AG04449 (cell line): ENCODE measurements at regions of chr7 and their contacts with region 1.

Region 1: GRCh38 chr7:157273208-157274093 is 63.4 kb upstream of the DNAJB6 start:
- DNase-seq: no peak
- H3K4me3 ChIP-seq: no peak overlapping the region
- CTCF ChIP-seq: peak; percentile 99

Region 2: DNA sequence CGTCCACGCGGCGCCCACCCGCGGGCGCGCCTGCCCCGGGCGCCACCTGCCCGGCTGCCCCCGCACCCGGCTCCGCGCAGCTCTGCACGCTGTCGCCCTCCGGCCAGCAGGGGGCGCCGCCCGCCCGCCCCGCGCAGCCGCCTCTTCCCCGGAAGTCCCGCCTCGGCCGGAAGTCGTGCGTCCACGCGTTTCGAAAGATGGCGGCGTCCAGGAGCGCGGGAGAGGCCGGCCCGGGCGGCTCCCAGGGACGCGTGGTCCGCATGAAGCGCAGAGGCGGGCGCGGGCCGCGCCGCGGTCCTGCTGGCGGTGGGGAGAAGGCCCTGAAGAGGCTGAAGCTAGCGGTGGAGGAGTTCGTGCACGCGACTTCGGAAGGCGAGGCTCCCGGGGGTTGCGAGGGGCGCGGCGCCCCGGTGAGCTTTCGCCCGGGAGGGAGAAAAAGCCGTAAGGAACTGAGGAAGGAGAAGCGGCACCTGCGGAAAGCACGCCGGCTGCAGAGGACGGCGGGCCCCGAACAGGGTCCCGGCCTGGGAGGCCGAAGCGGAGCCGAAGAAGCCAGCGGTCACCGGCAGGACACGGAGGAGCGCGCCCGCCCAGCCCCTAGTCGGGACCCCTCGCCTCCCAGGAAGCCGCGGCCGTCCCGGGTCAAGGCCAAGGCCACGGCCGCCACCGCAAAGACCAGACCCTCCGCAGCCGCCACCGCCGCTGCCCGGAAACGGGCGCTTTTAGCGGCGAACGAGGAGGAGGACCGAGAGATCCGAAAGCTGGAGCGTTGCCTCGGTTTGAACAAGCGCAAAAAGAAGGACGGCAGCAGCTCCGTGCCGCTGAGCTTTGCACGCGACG is 323.7 kb before region 1 on chr7 and contains the start of gene NOM1:
- CTCF ChIA-PET with region 1: interaction called, 11 read pairs
- POLR2A ChIA-PET with region 1: no interaction called
- DNase-seq: peak; percentile 3
- H3K4me3 ChIP-seq: peak within 1 kb of the TSS; percentile 78
- CTCF ChIP-seq: peak; percentile 69

Region 3: DNA sequence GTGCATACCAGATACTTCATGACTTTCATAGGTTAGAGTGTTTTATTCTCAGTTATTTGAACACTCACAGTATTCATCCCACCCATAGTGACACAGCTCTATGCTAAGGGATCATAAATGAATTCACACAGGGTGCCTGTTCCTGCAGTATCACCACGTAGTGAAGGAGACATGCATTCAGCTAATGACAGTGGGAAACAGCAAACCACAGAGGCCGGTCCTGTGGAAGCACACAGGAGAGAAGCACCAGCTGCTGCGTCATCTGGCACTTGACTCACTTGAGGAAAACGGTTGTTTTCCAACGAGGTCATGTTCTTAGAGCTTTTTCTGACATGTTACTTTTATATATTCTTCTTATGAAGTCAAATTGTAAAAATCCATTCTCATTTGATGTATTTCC is 61.8 kb before region 1 on chr7:
- CTCF ChIA-PET with region 1: interaction called, 14 read pairs
- POLR2A ChIA-PET with region 1: no interaction called
- DNase-seq: peak; percentile 75
- H3K4me3 ChIP-seq: no peak overlapping the region
- CTCF ChIP-seq: no peak

Region 4: GRCh38 chr7:157250605-157251228 is 22.7 kb before region 1 on chr7:
- CTCF ChIA-PET with region 1: interaction called, 40 read pairs
- POLR2A ChIA-PET with region 1: no interaction called
- DNase-seq: no peak
- H3K4me3 ChIP-seq: no peak overlapping the region
- CTCF ChIP-seq: peak; percentile 77

Region 5: DNA sequence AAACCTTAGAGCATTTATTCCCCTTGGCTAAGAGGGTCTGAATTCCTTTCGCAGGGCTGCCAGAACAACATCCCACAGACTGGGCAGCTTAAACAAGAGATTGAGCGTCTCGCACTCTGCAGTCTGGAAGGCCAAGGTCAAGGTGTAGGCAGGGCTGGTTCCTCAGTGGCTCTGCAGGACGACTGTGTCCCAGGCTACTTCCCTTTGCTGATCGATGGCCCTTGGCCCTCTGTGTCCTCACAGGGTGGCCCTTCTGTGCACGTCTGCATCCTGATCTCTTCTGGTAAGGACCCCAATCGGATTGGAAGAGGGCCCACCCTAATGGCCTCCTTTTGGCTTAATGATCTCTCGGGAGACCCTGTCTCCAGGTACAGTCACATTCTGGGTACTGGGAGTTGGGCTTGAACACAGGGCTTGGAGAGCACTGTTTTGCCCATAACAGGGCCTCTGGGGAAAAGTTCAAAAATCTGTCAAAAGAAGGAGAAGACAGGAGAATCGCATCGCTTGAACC is 28.2 kb after region 1 on chr7:
- CTCF ChIA-PET with region 1: interaction called, 20 read pairs
- POLR2A ChIA-PET with region 1: no interaction called
- DNase-seq: no peak
- H3K4me3 ChIP-seq: no peak overlapping the region
- CTCF ChIP-seq: no peak

Region 6: DNA sequence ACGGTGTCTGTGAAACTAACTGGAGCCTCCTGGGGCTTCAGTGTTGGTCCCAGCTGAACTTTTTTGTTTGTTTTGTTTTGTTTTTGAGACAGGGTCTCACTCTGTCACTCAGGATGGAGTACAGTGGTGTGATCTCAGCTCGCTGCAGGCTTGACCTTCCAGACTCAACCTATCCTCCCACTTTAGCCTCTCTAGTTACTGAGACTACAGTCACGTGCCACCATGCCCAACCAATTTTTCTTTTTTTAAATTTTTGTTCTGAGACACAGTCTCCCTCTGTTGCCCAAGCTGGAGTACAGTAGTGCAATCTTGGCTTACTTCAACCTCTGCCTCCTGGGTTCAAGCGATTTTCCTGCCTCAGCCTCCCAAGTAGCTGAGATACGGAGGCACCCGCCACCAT is 50.0 kb after region 1 on chr7:
- CTCF ChIA-PET with region 1: no interaction called
- POLR2A ChIA-PET with region 1: no interaction called
- DNase-seq: no peak
- H3K4me3 ChIP-seq: no peak overlapping the region
- CTCF ChIP-seq: no peak

Region 7: DNA sequence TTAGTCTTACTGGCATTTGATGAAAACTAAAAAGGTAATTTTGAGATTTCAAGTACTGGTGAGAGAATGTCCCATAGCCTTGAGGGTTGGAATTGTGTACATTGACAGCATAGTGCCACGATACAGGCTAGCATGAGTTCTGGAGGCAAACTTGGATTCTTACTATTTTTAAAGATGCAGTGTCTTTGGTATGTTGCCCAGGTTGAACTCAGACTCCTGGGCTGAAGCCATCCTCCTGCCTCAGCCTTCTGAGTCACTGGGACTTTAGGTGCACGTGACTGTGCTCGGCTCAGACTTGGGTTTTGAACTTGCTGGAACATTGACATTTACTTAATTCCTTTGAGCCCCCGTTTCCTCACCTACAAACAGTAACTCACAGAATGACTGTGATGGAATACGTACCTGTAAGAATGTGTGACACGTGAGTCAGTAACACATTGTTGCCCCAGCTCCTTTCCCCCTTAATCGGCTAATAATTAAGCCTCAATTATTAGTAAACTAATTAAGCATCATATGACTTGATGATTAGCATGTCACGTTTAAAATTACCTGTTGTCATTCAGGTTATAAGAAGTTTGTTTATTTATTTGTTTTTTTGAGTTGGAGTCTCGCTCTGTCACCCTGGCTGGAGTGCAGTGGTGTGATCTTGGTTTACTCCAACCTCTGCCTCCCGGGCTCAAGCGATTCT is 73.9 kb after region 1 on chr7:
- CTCF ChIA-PET with region 1: interaction called, 18 read pairs
- POLR2A ChIA-PET with region 1: no interaction called
- DNase-seq: no peak
- H3K4me3 ChIP-seq: no peak overlapping the region
- CTCF ChIP-seq: no peak

Region 8: DNA sequence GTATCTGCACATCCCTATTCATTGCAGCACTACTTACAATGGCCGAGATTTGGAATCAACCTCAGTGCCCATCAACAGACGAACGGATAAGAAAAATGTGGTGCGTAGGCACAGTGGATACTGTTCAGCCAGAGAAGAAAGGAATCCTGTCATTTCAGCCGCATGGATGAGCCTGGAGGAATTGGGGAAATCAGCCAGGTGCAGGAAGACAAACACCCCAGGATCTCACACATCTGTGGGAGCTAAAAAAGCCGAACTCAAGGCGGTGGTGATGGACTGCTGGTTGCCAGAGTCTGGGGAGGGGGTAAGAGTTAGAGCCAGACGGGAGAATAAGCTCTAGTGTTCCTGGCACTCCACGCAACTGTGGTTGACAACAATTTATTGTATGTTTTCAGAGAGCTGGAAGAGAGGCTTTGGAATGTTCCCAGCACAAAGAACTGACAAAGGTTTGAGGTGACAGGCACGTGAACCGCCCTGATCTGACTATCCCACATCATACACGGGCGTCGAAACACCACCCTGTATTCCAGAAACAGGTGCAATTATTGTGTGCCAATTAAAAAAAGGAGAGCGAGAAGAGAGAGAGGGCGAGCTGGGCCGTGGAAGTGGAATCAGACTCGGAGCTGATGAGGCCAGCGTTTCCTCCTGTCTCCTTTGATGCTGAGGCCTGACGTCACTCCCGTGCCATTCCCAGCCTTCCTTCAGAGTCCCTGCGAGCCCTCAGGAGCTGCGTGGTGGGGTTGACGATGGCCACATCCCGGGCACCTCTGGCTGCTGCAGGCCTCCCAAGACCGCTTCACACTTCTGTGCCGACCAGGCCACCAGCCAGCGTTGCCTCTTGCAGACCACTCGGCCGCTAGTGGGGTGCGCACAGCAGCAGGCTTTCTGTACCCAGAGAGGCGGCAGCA is 252.8 kb after region 1 on chr7:
- CTCF ChIA-PET with region 1: no interaction called
- POLR2A ChIA-PET with region 1: no interaction called
- DNase-seq: no peak
- H3K4me3 ChIP-seq: no peak overlapping the region
- CTCF ChIP-seq: no peak